Colonic mucosa (tissue), 4 donors: ENCODE measurements at regions of chr11 and their contacts with region 1.

Region 1: DNA sequence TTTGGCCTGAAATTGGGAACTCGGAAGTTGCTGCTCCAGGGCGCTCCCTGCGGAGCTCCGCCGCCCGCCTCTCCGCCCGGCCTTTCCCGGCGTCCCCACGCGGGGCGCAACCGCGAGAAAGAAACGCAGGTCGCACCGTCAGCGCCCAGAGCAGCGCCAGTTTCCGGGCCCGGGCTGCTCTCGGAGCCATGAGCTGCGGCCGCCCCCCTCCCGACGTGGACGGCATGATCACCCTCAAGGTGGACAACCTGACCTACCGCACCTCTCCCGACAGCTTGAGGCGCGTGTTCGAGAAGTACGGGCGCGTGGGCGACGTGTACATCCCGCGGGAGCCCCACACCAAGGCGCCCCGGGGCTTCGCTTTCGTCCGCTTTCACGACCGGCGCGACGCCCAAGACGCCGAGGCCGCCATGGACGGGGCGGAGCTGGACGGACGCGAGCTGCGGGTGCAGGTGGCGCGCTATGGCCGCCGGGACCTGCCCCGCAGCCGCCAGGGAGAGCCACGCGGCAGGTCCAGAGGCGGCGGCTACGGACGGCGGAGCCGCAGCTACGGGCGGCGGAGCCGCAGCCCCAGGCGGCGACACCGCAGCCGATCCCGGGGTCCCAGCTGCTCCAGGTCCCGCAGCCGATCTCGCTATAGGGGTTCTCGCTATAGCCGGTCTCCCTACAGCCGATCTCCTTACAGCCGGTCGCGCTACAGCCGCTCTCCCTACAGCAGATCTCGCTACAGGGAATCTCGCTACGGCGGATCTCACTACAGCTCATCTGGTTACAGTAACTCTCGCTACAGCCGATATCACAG is 521 bp downstream of the SRSF8 start:
- DNase-seq: peak; percentile 77
- H3K4me3 ChIP-seq: peak overlapping the region; percentile 79
- H3K27ac ChIP-seq: peak overlapping the region; percentile 98
- H3K4me1 ChIP-seq: peaks cover 10% of the 10 kb centered on the region
- H3K27me3 ChIP-seq: no peaks in the 10 kb centered on the region
- CTCF ChIP-seq: peak; percentile 44

Region 2: DNA sequence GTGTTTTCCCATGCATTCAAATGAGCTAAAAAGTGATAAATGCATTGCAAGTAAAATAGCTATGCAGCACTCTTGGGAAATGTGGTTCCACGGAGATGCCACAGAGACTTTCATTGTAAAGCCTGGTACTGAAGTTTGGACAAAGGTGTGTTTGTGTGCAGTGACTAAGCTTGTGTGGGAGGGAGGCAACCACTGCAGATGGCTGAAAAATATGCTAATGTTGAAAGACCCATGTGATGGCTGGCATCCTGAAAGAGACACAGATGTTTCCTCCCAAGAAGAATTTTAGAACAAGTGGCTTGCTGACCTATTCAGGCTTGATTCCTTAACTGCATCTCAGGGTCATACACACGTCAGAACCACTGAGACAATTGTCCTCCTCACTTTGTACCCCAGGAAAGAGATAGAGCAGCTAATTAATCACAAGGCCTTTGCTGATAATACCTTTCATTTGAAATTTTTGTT is 648.6 kb after region 1 on chr11:
- intact Hi-C with region 1: loop called (anchors 10 kb)
- DNase-seq: no peak
- H3K4me3 ChIP-seq: no peak overlapping the region
- H3K27ac ChIP-seq: no peak overlapping the region
- H3K4me1 ChIP-seq: no peaks in the 10 kb centered on the region
- H3K27me3 ChIP-seq: no peaks in the 10 kb centered on the region
- CTCF ChIP-seq: no peak